Activated CD4-positive, alpha-beta T cell treated with anti-CD3 and anti-CD28 coated beads, Interleukin-2, amount 10 ng/mL, durations not matched to agents 24 days and 14 days (primary cell): ENCODE measurements at regions of chr9 and their contacts with region 1.

Region 1: DNA sequence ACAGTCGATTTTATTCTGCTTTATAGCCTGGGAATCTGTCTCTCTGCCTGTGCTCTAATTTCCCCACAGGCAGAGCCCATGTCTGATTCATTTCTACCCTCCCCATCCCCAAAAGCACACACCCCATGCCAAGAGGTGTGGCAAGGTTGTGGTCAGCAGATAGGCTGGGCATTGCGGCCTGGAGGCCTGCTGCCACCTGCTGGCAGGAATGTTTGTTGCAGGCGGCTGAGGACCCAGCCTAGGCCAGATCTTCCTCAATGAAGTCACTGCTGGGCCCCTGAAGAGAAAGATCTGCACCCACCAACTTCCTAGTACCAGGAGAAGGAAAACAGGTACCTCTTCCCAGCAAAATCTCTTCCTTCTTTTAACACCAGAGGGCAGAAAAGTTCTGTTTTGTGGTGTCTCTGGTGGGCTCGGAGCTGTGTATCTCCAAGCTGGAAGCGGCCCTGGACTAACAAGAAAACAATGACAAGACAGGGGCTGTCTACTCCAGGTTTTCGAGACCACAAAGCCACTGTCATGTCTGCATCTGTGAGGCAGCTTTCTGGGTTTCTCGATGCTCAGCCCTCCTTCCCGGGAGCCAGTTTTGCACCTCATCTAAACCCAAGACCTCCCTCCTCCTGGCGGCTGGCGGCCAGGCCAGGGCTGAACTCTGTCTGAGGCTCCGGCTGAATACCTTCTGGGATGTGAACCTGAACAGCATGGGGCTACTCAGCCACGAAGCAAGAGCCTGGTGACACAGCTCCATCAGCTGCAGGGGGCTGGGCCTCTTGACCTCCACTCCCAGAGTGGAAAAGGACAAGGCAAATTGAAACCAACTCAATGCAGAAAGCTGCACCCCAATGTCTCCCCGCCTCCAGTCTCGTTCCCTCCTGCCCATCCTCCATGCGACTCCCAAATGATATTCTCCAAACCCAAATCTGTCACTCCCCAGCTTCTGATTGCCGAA is 4.9 kb downstream of the ANKS6 start:
- DNase-seq: peak; percentile 91
- H3K4me3 Mint-ChIP-seq: no peak overlapping the region
- H3K27ac Mint-ChIP-seq: no peak overlapping the region
- H3K4me1 Mint-ChIP-seq: peaks cover 22% of the 10 kb centered on the region
- H3K27me3 Mint-ChIP-seq: peaks cover 7% of the 10 kb centered on the region

Region 2: GRCh38 chr9:98315551-98316060 is 475.8 kb before region 1 on chr9:
- intact Hi-C with region 1: loop called (anchors 1 kb)
- DNase-seq: peak; percentile 93
- H3K4me3 Mint-ChIP-seq: no peak overlapping the region
- H3K27ac Mint-ChIP-seq: no peak overlapping the region
- H3K4me1 Mint-ChIP-seq: no peaks in the 10 kb centered on the region
- H3K27me3 Mint-ChIP-seq: no peaks in the 10 kb centered on the region

Region 3: DNA sequence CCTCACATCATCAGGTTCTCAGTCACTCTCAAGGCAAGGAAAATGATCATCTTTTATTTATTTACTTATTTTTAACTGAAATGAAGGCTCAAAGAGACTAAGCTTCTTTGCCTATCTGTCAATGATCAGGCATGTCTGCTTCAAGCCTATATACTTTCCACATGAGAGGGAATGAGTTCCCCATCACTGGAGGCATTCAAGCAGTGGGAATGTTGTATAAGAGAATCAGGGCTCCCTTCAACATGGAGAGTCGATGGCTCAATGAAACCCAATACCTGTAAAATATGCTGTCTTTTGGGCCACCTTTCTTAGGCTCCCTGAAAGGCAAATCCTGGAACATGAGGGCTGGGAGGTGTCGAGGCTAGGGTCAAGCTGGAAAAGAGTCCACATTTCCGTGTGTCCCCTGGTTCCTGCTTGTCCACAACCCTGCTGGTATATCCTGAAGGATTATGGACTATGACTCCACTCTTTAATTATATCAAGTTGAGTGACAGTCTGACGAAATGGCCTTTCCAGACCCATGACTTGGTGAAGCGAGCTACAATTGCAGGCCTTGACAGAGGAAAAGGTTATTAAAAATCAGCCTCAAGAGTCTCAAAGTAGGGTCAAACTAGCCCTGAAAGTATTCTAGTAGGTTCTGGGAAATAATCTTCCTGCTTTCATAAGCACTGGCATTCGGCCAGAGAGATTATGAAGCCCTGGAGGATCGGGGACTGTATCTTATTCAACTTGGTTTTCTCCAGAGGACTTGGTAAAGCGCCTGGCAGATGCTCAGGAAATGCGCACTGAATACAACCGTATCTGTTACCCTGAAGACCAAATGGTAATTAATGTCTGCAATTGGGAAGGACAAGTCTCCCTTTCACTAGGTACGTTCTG is 390.0 kb before region 1 on chr9:
- intact Hi-C with region 1: loop called (anchors 2 kb)
- DNase-seq: no peak
- H3K4me3 Mint-ChIP-seq: no peak overlapping the region
- H3K27ac Mint-ChIP-seq: no peak overlapping the region
- H3K4me1 Mint-ChIP-seq: no peaks in the 10 kb centered on the region
- H3K27me3 Mint-ChIP-seq: peaks cover 6% of the 10 kb centered on the region

Region 4: DNA sequence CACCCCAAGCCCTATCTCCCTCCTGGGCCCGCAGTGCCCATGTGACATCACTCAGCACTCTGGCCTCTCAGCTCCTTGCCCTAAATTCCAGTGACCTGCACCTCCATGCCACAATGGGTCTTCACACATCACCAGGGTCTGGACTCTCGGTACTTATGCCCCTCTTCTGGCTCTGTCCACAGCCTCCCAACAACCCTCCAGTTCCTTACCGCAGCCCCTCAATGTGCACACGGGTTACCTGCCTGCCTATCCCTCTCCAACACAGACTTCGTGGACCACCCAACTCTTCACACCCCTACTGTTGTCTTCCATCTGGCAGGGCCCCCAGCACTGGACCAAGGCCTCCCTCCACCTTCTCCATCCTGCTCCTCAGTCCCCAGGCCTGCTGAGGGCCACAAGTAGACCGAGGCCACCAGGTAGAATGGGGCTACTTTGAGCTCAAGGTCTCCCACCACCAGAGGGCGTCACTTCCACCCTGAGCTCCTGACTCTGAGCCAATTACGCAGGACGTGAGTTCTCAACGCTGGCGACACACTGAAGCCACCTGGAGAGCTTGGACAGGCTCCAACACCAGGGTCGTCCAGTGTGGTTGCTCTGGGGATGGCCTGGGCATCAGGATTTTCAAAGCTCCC is 254.8 kb before region 1 on chr9:
- intact Hi-C with region 1: loop called (anchors 5 kb)
- DNase-seq: peak; percentile 71
- H3K4me3 Mint-ChIP-seq: no peak overlapping the region
- H3K27ac Mint-ChIP-seq: no peak overlapping the region
- H3K4me1 Mint-ChIP-seq: no peaks in the 10 kb centered on the region
- H3K27me3 Mint-ChIP-seq: peaks cover 6% of the 10 kb centered on the region

Region 5: DNA sequence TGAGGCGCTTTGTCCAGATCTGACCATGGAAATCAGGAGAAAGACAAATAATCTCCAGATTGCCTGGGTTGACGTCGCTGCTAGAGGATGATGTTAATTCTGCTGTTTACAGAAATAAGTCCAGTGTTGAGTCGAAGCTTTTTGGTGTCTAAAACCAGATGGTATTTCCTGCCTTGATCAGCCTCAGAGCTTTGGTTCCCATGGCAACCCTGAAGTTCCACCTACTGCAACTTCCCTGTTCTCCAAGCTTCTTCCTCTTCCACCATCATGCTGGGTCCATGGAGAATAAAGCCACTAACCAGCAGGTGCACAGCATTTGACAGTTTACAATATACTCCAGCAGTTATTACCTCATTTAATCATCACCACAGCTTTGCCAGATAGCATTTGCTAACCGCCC is 64.7 kb before region 1 on chr9:
- intact Hi-C with region 1: no loop called
- DNase-seq: no peak
- H3K4me3 Mint-ChIP-seq: no peak overlapping the region
- H3K27ac Mint-ChIP-seq: no peak overlapping the region
- H3K4me1 Mint-ChIP-seq: no peaks in the 10 kb centered on the region
- H3K27me3 Mint-ChIP-seq: peaks cover 9% of the 10 kb centered on the region